Activated CD4-positive, alpha-beta T cell treated with anti-CD3 and anti-CD28 coated beads, Interleukin-2, amount 10 ng/mL, durations not matched to agents 24 days and 14 days (primary cell): ENCODE measurements at regions of chr17 and their contacts with region 1.

Region 1: GRCh38 chr17:29664743-29665480 is 42.2 kb upstream of the CORO6 start:
- DNase-seq: no peak
- H3K4me3 Mint-ChIP-seq: peak overlapping the region; percentile 15
- H3K27ac Mint-ChIP-seq: peak overlapping the region; percentile 77
- H3K4me1 Mint-ChIP-seq: peaks cover 25% of the 10 kb centered on the region
- H3K27me3 Mint-ChIP-seq: no peaks in the 10 kb centered on the region

Region 2: GRCh38 chr17:29625037-29625750 is 39.7 kb before region 1 on chr17:
- intact Hi-C with region 1: loop called (anchors 1 kb)
- DNase-seq: no peak
- H3K4me3 Mint-ChIP-seq: no peak overlapping the region
- H3K27ac Mint-ChIP-seq: peak overlapping the region; percentile 85
- H3K4me1 Mint-ChIP-seq: peaks cover 57% of the 10 kb centered on the region
- H3K27me3 Mint-ChIP-seq: no peaks in the 10 kb centered on the region

Region 3: DNA sequence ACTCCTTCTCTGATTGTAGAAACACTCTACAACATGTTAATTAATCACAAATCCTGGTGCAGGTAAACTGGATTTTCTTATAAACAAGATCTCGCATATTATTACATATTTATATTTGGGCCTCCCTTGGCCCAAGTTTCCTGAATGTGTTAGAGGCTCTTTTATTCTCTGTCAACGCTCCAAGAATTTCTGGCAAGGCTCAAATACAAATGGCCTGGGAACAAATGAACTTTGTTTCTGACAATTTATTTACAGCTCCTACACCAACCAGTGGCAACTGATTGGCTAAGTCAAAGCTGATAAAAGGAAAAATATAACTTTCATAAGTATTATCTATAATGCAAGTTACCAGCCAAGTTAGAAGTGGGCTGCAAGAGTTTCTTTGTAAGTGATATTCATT is 22.7 kb after region 1 on chr17:
- intact Hi-C with region 1: loop called (anchors 1 kb)
- DNase-seq: no peak
- H3K4me3 Mint-ChIP-seq: no peak overlapping the region
- H3K27ac Mint-ChIP-seq: no peak overlapping the region
- H3K4me1 Mint-ChIP-seq: peaks cover 10% of the 10 kb centered on the region
- H3K27me3 Mint-ChIP-seq: no peaks in the 10 kb centered on the region

Region 4: GRCh38 chr17:29722411-29723198 is 57.7 kb after region 1 on chr17:
- intact Hi-C with region 1: loop called (anchors 5 kb)
- DNase-seq: peak; percentile 79
- H3K4me3 Mint-ChIP-seq: peak overlapping the region; percentile 56
- H3K27ac Mint-ChIP-seq: peak overlapping the region; percentile 74
- H3K4me1 Mint-ChIP-seq: peaks cover 51% of the 10 kb centered on the region
- H3K27me3 Mint-ChIP-seq: no peaks in the 10 kb centered on the region